ENCODE measurements at regions of chr2 and their contacts with region 1.

Region 1: GRCh38 chr2:201231781-201232466 is 28.4 kb upstream of the CASP8 start:
- DNase-seq: peak; percentile 98
- H3K4me3 ChIP-seq: no peak overlapping the region
- H3K27ac ChIP-seq: peak overlapping the region; percentile 62 to 63
- H3K4me1 ChIP-seq: no peaks in the 10 kb centered on the region
- H3K27me3 ChIP-seq: no peaks in the 10 kb centered on the region
- CTCF ChIP-seq: peak; percentile 83 to 94 (median 91)
- POLR2A ChIP-seq: no peak

Region 2: GRCh38 chr2:201182650-201183364 is 49.1 kb before region 1 on chr2 and contains the start of gene CASP10:
- intact Hi-C with region 1: no loop called
- DNase-seq: no peak
- H3K4me3 ChIP-seq: peak within 1 kb of the TSS; percentile 10 to 21
- H3K27ac ChIP-seq: no peak within 1 kb of the TSS
- H3K4me1 ChIP-seq: no peaks in the 10 kb centered on the region
- H3K27me3 ChIP-seq: no peaks in the 10 kb centered on the region
- CTCF ChIP-seq: peak in 1 of 4 experiments; percentile 61
- POLR2A ChIP-seq: peak; percentile 64
- total RNA-seq, gene CASP10: 1.7 to 9.8 TPM

Region 3: DNA sequence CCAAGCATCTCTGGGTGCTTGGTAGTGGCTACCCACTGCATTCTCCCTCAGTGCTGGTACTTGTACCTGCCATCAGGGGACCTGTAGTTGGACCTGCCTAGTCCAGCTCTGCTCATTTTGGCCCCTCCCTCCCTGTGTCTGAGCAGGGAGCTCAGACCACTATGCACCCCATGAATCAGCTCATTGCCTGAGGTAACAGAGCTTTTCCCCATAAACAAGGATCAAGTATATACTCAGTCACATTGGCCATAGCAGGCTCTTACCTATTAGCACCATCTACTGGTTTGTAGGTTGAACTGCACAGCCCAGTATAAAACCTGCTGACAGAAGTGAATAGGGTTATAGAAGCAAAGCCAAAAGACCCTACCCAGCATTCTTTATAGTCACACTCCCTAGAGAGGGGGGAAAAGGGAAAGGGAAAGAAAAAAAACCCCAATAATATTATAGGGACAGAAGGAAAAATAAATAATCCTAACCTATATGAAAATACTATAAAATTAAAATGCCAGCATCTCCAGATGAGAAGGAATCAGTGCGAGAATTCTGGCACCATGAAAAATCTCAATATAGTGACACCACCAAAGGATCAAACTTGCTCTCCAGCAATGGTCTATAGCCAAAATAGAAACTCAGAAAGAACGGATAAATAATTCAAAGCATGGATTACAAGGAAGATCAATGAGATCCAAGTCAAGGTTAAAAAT is 132.1 kb after region 1 on chr2:
- intact Hi-C with region 1: loop called (anchors 5 kb)
- DNase-seq: peak; percentile 8
- H3K4me3 ChIP-seq: no peak overlapping the region
- H3K27ac ChIP-seq: no peak overlapping the region
- H3K4me1 ChIP-seq: no peaks in the 10 kb centered on the region
- H3K27me3 ChIP-seq: no peaks in the 10 kb centered on the region
- CTCF ChIP-seq: peak; percentile 24 to 75 (median 56)
- POLR2A ChIP-seq: no peak

Region 4: DNA sequence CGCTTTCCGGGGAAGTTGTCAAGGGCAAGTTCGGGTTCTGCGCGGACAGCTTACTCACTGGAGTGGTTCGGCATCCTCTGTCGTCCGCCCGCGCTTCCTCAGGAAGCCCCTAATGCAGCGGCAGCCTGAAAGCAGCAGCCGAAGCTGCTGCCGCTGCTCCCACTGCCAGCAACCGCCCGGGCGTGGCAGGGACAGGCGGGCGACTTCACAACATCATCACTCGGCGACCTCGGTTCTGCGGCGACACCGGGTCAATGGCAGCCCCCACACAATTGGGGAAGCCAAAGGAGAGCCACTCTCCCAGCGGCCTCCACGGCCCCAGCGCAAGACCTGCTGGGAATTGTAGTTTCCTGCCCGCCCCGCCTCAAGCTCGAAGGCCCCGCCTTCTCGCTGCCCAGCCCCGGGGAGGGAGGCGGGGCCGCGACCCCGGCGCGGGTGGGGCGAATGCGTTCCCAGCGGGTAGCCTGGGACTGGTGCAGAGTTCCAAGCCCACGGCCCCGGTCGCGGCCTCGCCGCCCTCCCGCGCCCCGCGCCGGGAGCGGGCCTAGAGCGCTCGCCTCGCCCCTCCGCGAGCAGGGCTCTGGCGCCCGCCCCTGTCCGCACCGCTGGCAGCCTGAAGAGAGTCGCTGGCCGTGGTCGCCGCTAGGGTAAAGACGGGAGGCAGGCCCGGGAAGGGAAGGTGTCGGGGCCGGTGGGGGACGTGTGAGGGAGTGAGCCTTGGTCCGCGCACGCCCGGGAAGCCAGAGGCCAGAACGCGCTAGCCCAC is 219.6 kb after region 1 on chr2 and contains the starts of genes STRADB and TRAK2:
- intact Hi-C with region 1: loop called (anchors 5 kb)
- DNase-seq: peak; percentile 94
- H3K4me3 ChIP-seq: peak within 1 kb of the TSS; percentile 93 to 96
- H3K27ac ChIP-seq: peak within 1 kb of the TSS; percentile 90 to 97
- H3K4me1 ChIP-seq: no peaks in the 10 kb centered on the region
- H3K27me3 ChIP-seq: no peaks in the 10 kb centered on the region
- CTCF ChIP-seq: peak in 3 of 4 experiments; percentile 7 to 55 (median 47)
- POLR2A ChIP-seq: peak; percentile 82
- total RNA-seq, gene STRADB: 20.4 to 29.8 TPM
- total RNA-seq, gene TRAK2: 16.9 to 18.9 TPM

Region 5: GRCh38 chr2:201621293-201621999 is 389.5 kb after region 1 on chr2:
- intact Hi-C with region 1: loop called (anchors 10 kb)
- DNase-seq: no peak
- H3K4me3 ChIP-seq: no peak overlapping the region
- H3K27ac ChIP-seq: no peak overlapping the region
- H3K4me1 ChIP-seq: no peaks in the 10 kb centered on the region
- H3K27me3 ChIP-seq: no peaks in the 10 kb centered on the region
- CTCF ChIP-seq: no peak
- POLR2A ChIP-seq: no peak

Measured in prostate gland (tissue), 2 donors.